IMR-90 (cell line): ENCODE measurements at regions of chr6 and their contacts with region 1.

Region 1: GRCh38 chr6:101296169-101296960 is 97.1 kb upstream of the GRIK2 start:
- DNase-seq: peak; percentile 2
- ATAC-seq: no peak
- H3K4me3 ChIP-seq: no peak overlapping the region
- H3K27ac ChIP-seq: no peak overlapping the region
- H3K4me1 ChIP-seq: no peaks in the 10 kb centered on the region
- H3K27me3 ChIP-seq: no peaks in the 10 kb centered on the region
- CTCF ChIP-seq: no peak
- POLR2A ChIP-seq: no peak
- RAD21 ChIP-seq: no peak

Region 2: GRCh38 chr6:100823041-100823440 is 473.3 kb before region 1 on chr6:
- CTCF ChIA-PET with region 1: no interaction called
- POLR2A ChIA-PET with region 1: interaction called, 14 read pairs
- dilution Hi-C with region 1: no loop called
- in situ Hi-C with region 1: no loop called
- intact Hi-C with region 1: no loop called
- DNase-seq: no peak
- ATAC-seq: no peak
- H3K4me3 ChIP-seq: no peak overlapping the region
- H3K27ac ChIP-seq: no peak overlapping the region
- H3K4me1 ChIP-seq: 0 out of 2 replicates have a peak, but pooled peaks cover 2% of the 10 kb centered on the region
- H3K27me3 ChIP-seq: no peaks in the 10 kb centered on the region
- CTCF ChIP-seq: no peak
- POLR2A ChIP-seq: no peak
- RAD21 ChIP-seq: no peak

Region 3: DNA sequence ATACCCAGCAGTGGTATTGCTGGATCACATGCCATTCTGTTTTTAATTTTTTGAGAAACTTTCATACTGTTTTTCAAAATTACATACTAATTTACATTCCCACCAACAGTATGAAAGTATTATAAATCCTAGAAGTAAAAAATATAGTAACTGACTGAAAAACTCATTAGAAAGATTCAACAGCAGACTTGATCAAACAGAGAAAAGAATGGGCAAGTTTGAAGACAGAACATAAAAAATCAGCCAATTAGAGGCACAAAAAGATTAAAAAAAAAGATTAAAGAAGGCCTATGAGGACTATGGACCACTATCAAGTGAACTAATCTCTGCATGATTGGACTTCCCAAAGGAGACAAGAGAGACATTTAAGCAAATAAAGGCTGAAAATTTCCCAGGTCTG is 46.9 kb before region 1 on chr6:
- CTCF ChIA-PET with region 1: no interaction called
- POLR2A ChIA-PET with region 1: no interaction called
- dilution Hi-C with region 1: no loop called
- in situ Hi-C with region 1: no loop called
- intact Hi-C with region 1: no loop called
- DNase-seq: no peak
- ATAC-seq: no peak
- H3K4me3 ChIP-seq: no peak overlapping the region
- H3K27ac ChIP-seq: no peak overlapping the region
- H3K4me1 ChIP-seq: no peaks in the 10 kb centered on the region
- H3K27me3 ChIP-seq: no peaks in the 10 kb centered on the region
- CTCF ChIP-seq: no peak
- POLR2A ChIP-seq: no peak
- RAD21 ChIP-seq: no peak

Region 4: DNA sequence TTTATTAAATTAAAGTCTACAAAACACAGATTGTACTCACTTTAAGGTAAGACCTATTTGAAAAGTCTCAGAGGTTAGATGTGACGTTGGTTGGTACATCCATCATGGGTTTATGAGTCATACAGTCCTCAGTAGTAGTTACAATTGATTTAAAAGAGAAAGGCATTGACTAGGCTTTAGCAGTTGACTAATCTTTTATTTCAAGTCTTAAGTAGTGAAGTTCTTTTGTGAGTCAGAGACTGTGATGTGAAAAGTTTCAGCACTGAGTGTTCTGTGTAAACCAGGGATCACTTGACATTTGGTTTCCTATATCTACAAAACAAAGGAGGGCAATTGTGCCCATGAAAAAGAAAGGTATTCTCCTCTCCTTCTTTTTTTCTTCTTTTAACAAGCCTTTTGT is 318.4 kb after region 1 on chr6:
- CTCF ChIA-PET with region 1: no interaction called
- POLR2A ChIA-PET with region 1: no interaction called
- dilution Hi-C with region 1: no loop called
- in situ Hi-C with region 1: no loop called
- intact Hi-C with region 1: no loop called
- DNase-seq: peak; percentile 87
- ATAC-seq: peak; percentile 72
- H3K4me3 ChIP-seq: no peak overlapping the region
- H3K27ac ChIP-seq: no peak overlapping the region
- H3K4me1 ChIP-seq: no peaks in the 10 kb centered on the region
- H3K27me3 ChIP-seq: no peaks in the 10 kb centered on the region
- CTCF ChIP-seq: no peak
- POLR2A ChIP-seq: no peak
- RAD21 ChIP-seq: no peak